ENCODE measurements at regions of chr7 and their contacts with region 1.

Region 1: GRCh38 chr7:151448261-151449252 is 8.6 kb upstream of the CRYGN start:
- DNase-seq: peak; percentile 60
- H3K4me3 Mint-ChIP-seq: peak overlapping the region; percentile 58
- H3K27ac Mint-ChIP-seq: no peak overlapping the region
- H3K4me1 Mint-ChIP-seq: peaks cover 5% of the 10 kb centered on the region
- H3K27me3 Mint-ChIP-seq: peaks cover 28% of the 10 kb centered on the region

Region 2: GRCh38 chr7:151315038-151315655 is 133.4 kb before region 1 on chr7:
- intact Hi-C with region 1: loop called (anchors 1 kb)
- DNase-seq: peak; percentile 68
- H3K4me3 Mint-ChIP-seq: no peak overlapping the region
- H3K27ac Mint-ChIP-seq: no peak overlapping the region
- H3K4me1 Mint-ChIP-seq: peaks cover 9% of the 10 kb centered on the region
- H3K27me3 Mint-ChIP-seq: no peaks in the 10 kb centered on the region

Region 3: DNA sequence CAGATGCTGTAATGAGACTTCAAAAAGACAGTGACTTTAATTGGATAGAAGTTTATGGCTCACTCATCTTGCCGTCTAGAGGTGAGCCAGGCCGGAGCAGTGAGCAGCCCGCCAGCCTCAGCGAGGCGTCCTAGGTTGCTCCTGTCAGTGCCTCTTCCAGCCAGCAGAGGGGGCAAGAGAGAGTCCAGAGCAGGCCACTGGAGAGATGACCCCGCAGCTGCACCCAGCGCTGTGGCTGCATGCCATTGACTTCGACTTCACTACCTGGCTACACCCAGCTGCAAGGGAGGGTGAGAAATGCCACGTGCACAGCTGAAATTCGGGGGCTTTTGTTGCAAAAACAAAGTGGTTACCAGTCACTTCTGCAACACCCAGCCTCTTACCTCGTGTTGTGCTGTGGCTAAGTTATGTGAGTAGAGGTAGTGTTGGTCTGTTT is 80.4 kb before region 1 on chr7:
- intact Hi-C with region 1: loop called (anchors 1 kb)
- DNase-seq: peak; percentile 64
- H3K4me3 Mint-ChIP-seq: no peak overlapping the region
- H3K27ac Mint-ChIP-seq: no peak overlapping the region
- H3K4me1 Mint-ChIP-seq: peaks cover 7% of the 10 kb centered on the region
- H3K27me3 Mint-ChIP-seq: no peaks in the 10 kb centered on the region

Region 4: GRCh38 chr7:151415375-151416112 is 33.0 kb before region 1 on chr7:
- intact Hi-C with region 1: loop called (anchors 2 kb)
- DNase-seq: no peak
- H3K4me3 Mint-ChIP-seq: no peak overlapping the region
- H3K27ac Mint-ChIP-seq: no peak overlapping the region
- H3K4me1 Mint-ChIP-seq: peaks cover 18% of the 10 kb centered on the region
- H3K27me3 Mint-ChIP-seq: peaks cover 44% of the 10 kb centered on the region

Region 5: DNA sequence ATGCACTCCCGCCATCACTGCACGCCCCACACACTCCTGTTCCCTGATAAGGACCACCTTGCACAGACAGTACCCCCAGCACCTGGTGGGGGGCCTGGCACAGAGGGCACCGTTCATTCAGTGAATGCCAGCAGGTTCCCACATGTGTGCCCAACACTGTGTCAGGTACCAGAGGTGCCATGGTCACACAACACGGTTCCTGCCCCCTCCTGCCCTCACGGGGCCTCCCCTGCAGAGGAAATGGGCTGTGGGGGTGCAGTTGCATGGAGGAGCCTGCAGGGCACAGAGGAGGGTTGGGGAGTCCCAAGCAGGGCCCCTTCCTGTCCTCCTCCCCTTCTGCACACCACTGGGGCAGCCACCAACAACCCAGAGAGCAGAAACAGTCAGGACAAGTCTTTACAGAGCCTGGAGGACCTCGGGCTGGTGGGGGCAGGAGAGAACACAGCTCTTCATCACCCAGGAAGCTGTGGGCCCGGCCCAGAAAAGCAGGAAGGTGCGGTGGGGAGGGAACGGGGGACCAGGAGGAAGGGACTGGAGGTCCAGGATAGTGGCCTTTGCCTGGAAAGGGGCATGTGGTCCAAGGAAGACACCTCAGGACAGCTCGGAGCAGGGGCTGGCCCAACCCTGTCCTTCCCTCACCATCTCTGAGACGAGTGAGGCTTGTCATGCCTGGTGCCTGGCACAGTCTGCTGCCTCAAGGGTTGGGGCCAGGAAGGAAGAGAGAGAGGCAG is 15.6 kb before region 1 on chr7:
- intact Hi-C with region 1: loop called (anchors 2 kb)
- DNase-seq: peak; percentile 38
- H3K4me3 Mint-ChIP-seq: no peak overlapping the region
- H3K27ac Mint-ChIP-seq: peak overlapping the region; percentile 71
- H3K4me1 Mint-ChIP-seq: peaks cover 24% of the 10 kb centered on the region
- H3K27me3 Mint-ChIP-seq: peaks cover 10% of the 10 kb centered on the region

Region 6: DNA sequence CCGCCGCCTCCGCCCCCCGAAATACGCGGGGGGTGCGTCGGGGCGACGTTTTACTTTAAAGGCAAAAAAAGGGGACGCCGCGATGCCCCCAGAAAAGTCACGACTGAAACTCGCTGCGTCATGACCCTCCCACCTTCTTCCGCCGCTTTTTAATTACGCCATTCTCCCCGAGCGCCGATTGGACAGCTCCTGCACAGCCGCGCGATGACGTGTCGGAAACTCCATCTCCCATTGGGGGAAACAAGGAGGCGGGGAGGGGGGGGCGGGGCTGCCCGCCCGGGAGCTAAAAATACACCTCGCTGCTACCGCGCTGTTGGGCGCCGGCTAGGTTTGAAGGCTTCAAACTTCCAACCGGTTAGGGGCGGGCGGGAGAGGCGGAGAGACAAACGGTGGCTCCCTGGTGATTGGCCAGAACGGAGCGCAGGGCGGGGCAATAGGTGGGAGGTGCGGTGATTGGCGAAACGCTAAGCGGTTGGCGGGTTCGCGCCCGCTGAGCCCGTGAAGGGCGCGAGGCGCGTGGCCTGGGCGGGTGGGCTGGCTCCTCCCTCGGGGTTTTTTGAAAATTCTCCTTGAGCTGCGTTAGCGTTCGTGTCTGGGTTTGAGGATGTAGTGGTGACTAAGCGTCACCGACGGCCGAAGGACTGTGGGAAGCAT is 71.3 kb after region 1 on chr7 and contains the start of gene RHEB:
- intact Hi-C with region 1: loop called (anchors 2 kb)
- DNase-seq: peak; percentile 97
- H3K4me3 Mint-ChIP-seq: peak within 1 kb of the TSS; percentile 94
- H3K27ac Mint-ChIP-seq: peak within 1 kb of the TSS; percentile 99
- H3K4me1 Mint-ChIP-seq: peaks cover 32% of the 10 kb centered on the region
- H3K27me3 Mint-ChIP-seq: peaks cover 10% of the 10 kb centered on the region
- total RNA-seq, gene RHEB: 62.5 and 65.5 TPM in 2 replicates